CD4-positive, alpha-beta T cell (primary cell): ENCODE measurements at regions of chr16 and their contacts with region 1.

Region 1: GRCh38 chr16:89860747-89861304 is 12.6 kb upstream of the TCF25 start:
- DNase-seq: peak; percentile 56 to 85 (median 70)
- ATAC-seq: peak; percentile 85
- H3K4me3 ChIP-seq: no peak overlapping the region
- H3K4me3 Mint-ChIP-seq: peak overlapping the region; percentile 21
- H3K27ac ChIP-seq: no peak overlapping the region
- H3K27ac Mint-ChIP-seq: peak overlapping the region; percentile 57
- H3K4me1 ChIP-seq: peaks cover 42% of the 10 kb centered on the region
- H3K4me1 Mint-ChIP-seq: peaks cover 29% of the 10 kb centered on the region
- H3K27me3 ChIP-seq: no peaks in the 10 kb centered on the region
- H3K27me3 Mint-ChIP-seq: no peaks in the 10 kb centered on the region
- CTCF ChIP-seq: peak; percentile 98

Region 2: GRCh38 chr16:89574681-89575246 is 286.1 kb before region 1 on chr16:
- CTCF ChIA-PET with region 1: no interaction called
- POLR2A ChIA-PET with region 1: no interaction called
- intact Hi-C with region 1: loop called in 1 of 2 experiments (anchors 10 kb)
- DNase-seq: peak; percentile 10 to 77 (median 49)
- ATAC-seq: peak; percentile 67
- H3K4me3 ChIP-seq: peak overlapping the region; percentile 39
- H3K4me3 Mint-ChIP-seq: peak overlapping the region; percentile 45
- H3K27ac ChIP-seq: no peak overlapping the region
- H3K27ac Mint-ChIP-seq: no peak overlapping the region
- H3K4me1 ChIP-seq: peaks cover 34% of the 10 kb centered on the region
- H3K4me1 Mint-ChIP-seq: peaks cover 16% of the 10 kb centered on the region
- H3K27me3 ChIP-seq: peaks cover 11 to 14% of the 10 kb centered on the region in 2 experiments
- H3K27me3 Mint-ChIP-seq: peaks cover 20% of the 10 kb centered on the region
- CTCF ChIP-seq: peak; percentile 34

Region 3: DNA sequence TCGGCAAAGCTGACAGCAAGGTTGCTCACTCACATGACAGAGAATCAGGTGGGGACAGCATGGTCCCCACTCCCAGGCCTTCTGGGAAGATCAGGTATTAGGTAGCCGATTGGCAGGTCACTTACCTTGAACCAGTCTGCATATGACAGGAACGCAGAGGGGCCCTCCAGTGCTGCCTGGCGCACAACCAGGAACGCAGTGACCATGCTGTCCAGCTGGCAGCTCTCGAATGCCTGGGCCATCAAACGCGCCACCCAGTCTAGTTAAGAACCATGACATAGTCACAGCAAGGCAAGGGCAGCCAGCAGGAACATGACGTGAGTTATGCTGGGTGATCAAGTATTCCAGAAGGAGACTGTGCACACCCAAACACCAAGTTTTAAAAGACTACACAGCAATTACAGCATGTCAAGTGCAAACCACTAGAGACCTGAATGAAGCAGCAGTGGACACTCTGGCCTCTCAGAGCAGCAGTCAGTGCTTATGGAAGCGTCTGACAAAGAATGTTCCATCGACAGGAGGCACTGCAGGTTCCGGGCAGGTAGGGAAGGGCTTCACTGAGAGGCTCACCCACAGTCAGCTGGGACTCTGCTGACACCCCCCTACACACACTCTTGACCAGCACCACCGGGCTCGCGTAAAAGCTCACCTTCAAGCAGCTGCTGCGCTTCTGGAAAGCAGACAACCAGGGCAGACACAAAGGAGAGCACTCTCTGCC is 69.4 kb before region 1 on chr16:
- CTCF ChIA-PET with region 1: interaction called, 5 read pairs
- POLR2A ChIA-PET with region 1: no interaction called
- intact Hi-C with region 1: loop called in 1 of 2 experiments (anchors 2 kb)
- DNase-seq: no peak
- ATAC-seq: no peak
- H3K4me3 ChIP-seq: no peak overlapping the region
- H3K4me3 Mint-ChIP-seq: no peak overlapping the region
- H3K27ac ChIP-seq: no peak overlapping the region
- H3K27ac Mint-ChIP-seq: no peak overlapping the region
- H3K4me1 ChIP-seq: peaks cover 14% of the 10 kb centered on the region
- H3K4me1 Mint-ChIP-seq: peaks cover 15% of the 10 kb centered on the region
- H3K27me3 ChIP-seq: no peaks in the 10 kb centered on the region
- H3K27me3 Mint-ChIP-seq: no peaks in the 10 kb centered on the region
- CTCF ChIP-seq: no peak

Region 4: DNA sequence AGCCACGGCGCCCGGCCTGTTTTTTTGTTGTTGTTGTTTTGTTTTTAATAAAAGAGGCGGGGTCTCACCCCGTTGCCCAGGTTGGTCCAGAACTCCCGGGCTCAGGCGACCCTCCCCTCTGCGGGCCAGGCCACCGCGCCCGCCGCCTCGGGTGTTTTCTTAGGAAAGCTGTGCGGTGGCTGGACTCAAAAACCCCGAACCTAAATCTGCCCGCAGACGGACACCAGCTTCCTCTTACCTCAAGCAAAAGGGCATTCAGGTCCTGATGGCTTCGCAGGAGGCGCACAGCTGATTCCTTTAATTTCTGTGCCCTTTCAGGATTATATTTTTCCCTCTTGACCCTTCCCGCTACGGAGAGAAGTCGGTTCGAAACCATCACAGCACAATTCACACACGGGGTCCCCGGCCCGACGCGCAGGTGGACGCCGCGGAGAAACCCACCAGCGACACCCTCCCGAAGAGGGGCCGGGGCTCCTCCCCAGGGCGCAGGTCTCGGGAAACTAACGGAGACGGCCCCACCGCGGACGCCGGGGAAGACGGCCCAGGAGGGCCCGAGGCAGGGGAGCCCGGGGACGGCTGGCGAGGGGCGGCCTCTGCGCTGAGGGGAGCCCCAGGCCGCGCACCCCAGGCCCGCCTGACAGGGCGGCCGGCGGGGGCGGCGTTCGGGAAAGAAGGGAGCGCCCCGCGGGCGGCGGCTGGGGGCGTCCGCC is 45.0 kb before region 1 on chr16:
- CTCF ChIA-PET with region 1: interaction called, 4 read pairs
- POLR2A ChIA-PET with region 1: no interaction called
- intact Hi-C with region 1: loop called in 1 of 2 experiments (anchors 1 kb)
- DNase-seq: peak in 2 of 14 experiments; percentile 13 to 39
- ATAC-seq: peak; percentile 9
- H3K4me3 ChIP-seq: peak overlapping the region; percentile 64
- H3K4me3 Mint-ChIP-seq: peak overlapping the region; percentile 83
- H3K27ac ChIP-seq: no peak overlapping the region
- H3K27ac Mint-ChIP-seq: no peak overlapping the region
- H3K4me1 ChIP-seq: peaks cover 29% of the 10 kb centered on the region
- H3K4me1 Mint-ChIP-seq: peaks cover 29% of the 10 kb centered on the region
- H3K27me3 ChIP-seq: no peaks in the 10 kb centered on the region
- H3K27me3 Mint-ChIP-seq: no peaks in the 10 kb centered on the region
- CTCF ChIP-seq: no peak